OCI-LY7 (cell line): ENCODE measurements at regions of chr7 and their contacts with region 1.

Region 1: GRCh38 chr7:133009426-133010252 is 72.3 kb downstream of the CHCHD3 start:
- DNase-seq: no peak
- H3K4me3 ChIP-seq: no peak overlapping the region
- H3K27ac ChIP-seq: no peak overlapping the region
- H3K4me1 ChIP-seq: no peaks in the 10 kb centered on the region
- CTCF ChIP-seq: no peak

Region 2: DNA sequence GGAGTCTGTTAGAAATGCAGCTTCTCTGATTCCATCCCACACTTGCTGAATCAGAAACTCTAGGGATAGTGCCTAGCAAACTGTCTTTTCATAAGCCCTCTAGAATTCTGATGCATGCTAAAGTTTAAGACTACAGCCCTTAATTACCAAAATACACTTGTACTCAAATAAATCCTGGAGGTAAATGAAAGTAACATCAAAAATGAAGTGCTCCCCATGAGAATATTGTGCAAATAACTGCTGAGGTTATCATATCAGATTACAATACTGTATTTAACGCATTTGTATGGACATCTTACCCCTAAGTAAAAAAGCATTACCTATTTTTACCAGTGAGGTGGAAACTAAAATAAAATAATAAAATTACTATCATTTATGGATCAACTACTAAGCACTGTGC is 32.4 kb before region 1 on chr7:
- CTCF ChIA-PET with region 1: no interaction called
- POLR2A ChIA-PET with region 1: no interaction called
- intact Hi-C with region 1: no loop called
- DNase-seq: no peak
- H3K4me3 ChIP-seq: no peak overlapping the region
- H3K27ac ChIP-seq: no peak overlapping the region
- H3K4me1 ChIP-seq: no peaks in the 10 kb centered on the region
- CTCF ChIP-seq: no peak

Region 3: GRCh38 chr7:133036289-133036688 is 26.6 kb after region 1 on chr7:
- CTCF ChIA-PET with region 1: no interaction called
- POLR2A ChIA-PET with region 1: interaction called, 10 read pairs
- intact Hi-C with region 1: no loop called
- DNase-seq: no peak
- H3K4me3 ChIP-seq: no peak overlapping the region
- H3K27ac ChIP-seq: peak overlapping the region; percentile 87
- H3K4me1 ChIP-seq: peaks cover 32% of the 10 kb centered on the region
- CTCF ChIP-seq: no peak